ENCODE measurements at regions of chr6 and their contacts with region 1.

Region 1: DNA sequence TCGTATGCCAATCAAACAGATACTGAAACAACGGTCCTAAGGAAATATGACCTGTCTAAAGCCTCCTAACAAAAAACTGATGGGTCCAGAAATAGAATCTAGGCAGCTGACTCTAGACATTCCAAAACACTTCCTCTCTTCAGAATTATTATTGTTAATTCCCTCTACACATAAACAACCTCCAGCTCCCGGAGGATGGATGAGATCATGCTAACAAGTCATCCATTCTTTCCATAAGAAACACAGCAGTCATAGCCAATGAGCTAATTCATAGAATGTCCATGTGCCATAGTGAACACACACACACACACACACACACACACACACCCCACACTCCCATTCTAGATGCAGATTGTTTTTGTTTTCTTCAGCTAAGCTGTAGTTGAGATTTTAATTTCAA is 44.3 kb downstream of the HDGFL1 start:
- DNase-seq: peak; percentile 96
- H3K4me3 ChIP-seq: no peak overlapping the region
- H3K27ac ChIP-seq: peak overlapping the region; percentile 53
- H3K4me1 ChIP-seq: peaks cover 12% of the 10 kb centered on the region
- H3K27me3 ChIP-seq: no peaks in the 10 kb centered on the region
- CTCF ChIP-seq: no peak
- POLR2A ChIP-seq: no peak

Region 2: DNA sequence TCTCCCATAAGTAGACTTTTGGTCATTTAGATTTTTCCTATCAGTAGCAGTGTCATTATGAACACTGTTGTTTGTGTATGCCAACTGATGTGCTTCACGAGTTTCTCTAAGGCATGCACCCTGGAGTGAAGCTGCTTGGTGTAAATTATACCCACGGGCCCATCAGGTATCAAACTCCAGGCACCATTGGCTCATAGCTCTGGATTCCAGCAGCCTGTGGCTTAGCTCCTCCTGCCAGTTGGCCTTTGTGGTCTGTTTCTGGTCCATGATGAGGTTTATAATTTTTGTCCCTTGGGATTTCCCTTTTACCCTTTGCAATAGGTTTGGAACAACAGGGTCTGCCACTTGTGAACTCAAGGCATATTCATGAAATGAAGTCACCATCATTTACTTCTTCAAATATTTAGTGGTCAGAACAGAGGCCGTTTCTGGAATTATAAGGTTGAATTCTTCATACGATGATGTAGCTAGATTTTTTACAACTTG is 667.4 kb before region 1 on chr6:
- CTCF ChIA-PET with region 1: no interaction called
- POLR2A ChIA-PET with region 1: no interaction called
- dilution Hi-C with region 1: no loop called
- intact Hi-C with region 1: loop called (anchors 5 kb)
- DNase-seq: no peak
- H3K4me3 ChIP-seq: no peak overlapping the region
- H3K27ac ChIP-seq: no peak overlapping the region
- H3K4me1 ChIP-seq: peaks cover 51% of the 10 kb centered on the region
- H3K27me3 ChIP-seq: no peaks in the 10 kb centered on the region
- CTCF ChIP-seq: no peak
- POLR2A ChIP-seq: no peak

Region 3: GRCh38 chr6:22471132-22471690 is 142.5 kb before region 1 on chr6:
- CTCF ChIA-PET with region 1: no interaction called
- POLR2A ChIA-PET with region 1: no interaction called
- dilution Hi-C with region 1: no loop called
- intact Hi-C with region 1: loop called (anchors 2 kb)
- DNase-seq: peak; percentile 98
- H3K4me3 ChIP-seq: no peak overlapping the region
- H3K27ac ChIP-seq: peak overlapping the region; percentile 56
- H3K4me1 ChIP-seq: peaks cover 27% of the 10 kb centered on the region
- H3K27me3 ChIP-seq: no peaks in the 10 kb centered on the region
- CTCF ChIP-seq: no peak
- POLR2A ChIP-seq: no peak

Region 4: GRCh38 chr6:22647719-22648118 is 34.0 kb after region 1 on chr6:
- CTCF ChIA-PET with region 1: interaction called, 14 read pairs
- POLR2A ChIA-PET with region 1: no interaction called
- dilution Hi-C with region 1: no loop called
- intact Hi-C with region 1: no loop called
- DNase-seq: peak; percentile 73
- H3K4me3 ChIP-seq: no peak overlapping the region
- H3K27ac ChIP-seq: no peak overlapping the region
- H3K4me1 ChIP-seq: no peaks in the 10 kb centered on the region
- H3K27me3 ChIP-seq: no peaks in the 10 kb centered on the region
- CTCF ChIP-seq: no peak
- POLR2A ChIP-seq: no peak

Region 5: DNA sequence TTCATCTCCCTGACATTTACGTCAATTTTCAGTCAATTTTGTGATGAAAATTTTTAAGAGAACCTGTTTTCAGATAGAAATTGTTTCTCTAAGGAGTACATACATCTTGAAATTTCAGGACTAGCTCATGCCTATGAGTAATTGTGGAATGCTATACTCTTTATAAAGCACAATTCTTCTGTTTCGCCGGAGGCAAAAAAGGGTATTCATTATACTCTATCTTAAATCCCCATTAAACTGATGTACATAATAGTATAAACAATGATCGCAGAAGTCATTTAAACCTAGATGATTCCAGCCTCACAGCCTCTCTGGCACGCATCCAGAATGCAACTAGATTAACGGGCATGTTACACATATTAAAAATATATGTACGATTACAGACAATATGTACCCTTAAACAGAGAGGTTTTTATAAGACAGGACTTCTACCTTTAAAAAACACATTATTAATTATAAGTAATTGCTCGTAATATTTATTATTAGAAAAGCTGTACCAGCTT is 1574.9 kb after region 1 on chr6:
- CTCF ChIA-PET with region 1: no interaction called
- POLR2A ChIA-PET with region 1: no interaction called
- dilution Hi-C with region 1: no loop called
- intact Hi-C with region 1: no loop called
- DNase-seq: no peak
- H3K4me3 ChIP-seq: no peak overlapping the region
- H3K27ac ChIP-seq: no peak overlapping the region
- H3K4me1 ChIP-seq: no peaks in the 10 kb centered on the region
- H3K27me3 ChIP-seq: no peaks in the 10 kb centered on the region
- CTCF ChIP-seq: no peak
- POLR2A ChIP-seq: no peak

Measured in endothelial cell of umbilical vein (primary cell).